Activated naive CD4-positive, alpha-beta T cell treated with anti-CD3 and anti-CD28 coated beads for 36 hours (primary cell): ENCODE measurements at regions of chr20 and their contacts with region 1.

Region 1: DNA sequence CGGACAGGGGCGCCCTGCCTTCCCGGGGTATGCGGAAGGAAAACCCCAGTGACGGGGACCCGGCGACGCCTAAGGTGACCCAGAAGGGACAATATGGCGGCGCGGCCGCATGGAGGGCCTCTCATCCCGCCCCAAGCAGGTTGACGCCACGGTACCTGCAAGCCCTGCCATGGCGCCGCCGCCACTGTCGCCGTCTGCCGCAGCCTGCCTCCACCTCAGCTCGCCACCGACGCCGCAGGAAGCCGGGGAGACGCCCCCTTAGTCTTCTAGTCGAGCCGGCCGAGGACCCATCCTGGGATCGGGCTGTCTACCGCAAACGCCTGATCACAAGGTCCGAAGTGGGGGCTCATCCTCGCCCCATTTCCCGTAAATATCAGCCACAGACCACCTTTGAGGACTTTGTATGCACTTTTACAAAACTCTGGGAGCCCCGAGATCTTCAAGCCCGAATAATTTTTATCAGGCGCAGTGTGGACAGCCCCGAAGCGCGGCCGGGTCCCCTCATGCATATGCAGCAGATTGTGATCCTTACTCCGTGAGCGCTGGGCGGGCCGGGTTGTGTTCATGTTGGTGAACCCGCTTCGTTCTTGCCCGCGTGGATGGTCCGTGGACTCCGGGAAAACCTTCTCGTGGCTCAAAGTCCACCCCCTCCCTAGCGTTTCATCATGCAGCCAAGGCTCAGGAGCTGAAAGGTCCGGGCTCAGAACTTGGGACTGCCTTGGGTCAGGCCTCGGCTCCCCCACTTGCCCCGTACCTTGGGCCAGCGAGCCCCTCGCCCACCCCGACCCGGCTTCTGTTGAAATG is at the start of gene BLCAP:
- DNase-seq: peak; percentile 94
- H3K4me3 Mint-ChIP-seq: peak within 1 kb of the TSS; percentile 87
- H3K27ac Mint-ChIP-seq: peak within 1 kb of the TSS; percentile 99
- H3K4me1 Mint-ChIP-seq: peaks cover 42% of the 10 kb centered on the region
- H3K27me3 Mint-ChIP-seq: no peaks in the 10 kb centered on the region
- total RNA-seq, gene BLCAP: 14.2 to 16.2 TPM

Region 2: GRCh38 chr20:36919715-36920333 is 608.0 kb before region 1 on chr20:
- CTCF ChIA-PET with region 1: no interaction called
- intact Hi-C with region 1: no loop called
- DNase-seq: peak; percentile 43
- H3K4me3 Mint-ChIP-seq: no peak overlapping the region
- H3K27ac Mint-ChIP-seq: peak overlapping the region; percentile 67
- H3K4me1 Mint-ChIP-seq: peaks cover 17% of the 10 kb centered on the region
- H3K27me3 Mint-ChIP-seq: no peaks in the 10 kb centered on the region

Region 3: GRCh38 chr20:37095599-37096414 is 432.0 kb before region 1 on chr20 and contains the start of gene RBL1:
- CTCF ChIA-PET with region 1: no interaction called
- intact Hi-C with region 1: loop called (anchors 2 kb)
- DNase-seq: peak; percentile 91
- H3K4me3 Mint-ChIP-seq: peak within 1 kb of the TSS; percentile 92
- H3K27ac Mint-ChIP-seq: peak within 1 kb of the TSS; percentile 100
- H3K4me1 Mint-ChIP-seq: peaks cover 37% of the 10 kb centered on the region
- H3K27me3 Mint-ChIP-seq: no peaks in the 10 kb centered on the region
- total RNA-seq, gene RBL1: 32.9 to 36.2 TPM

Region 4: GRCh38 chr20:37178839-37179670 is 348.8 kb before region 1 on chr20 and contains the starts of genes MROH8 and RPN2:
- CTCF ChIA-PET with region 1: interaction called, 3 read pairs
- intact Hi-C with region 1: loop called (anchors 1 kb)
- DNase-seq: peak; percentile 98
- H3K4me3 Mint-ChIP-seq: peak within 1 kb of the TSS; percentile 94
- H3K27ac Mint-ChIP-seq: peak within 1 kb of the TSS; percentile 97
- H3K4me1 Mint-ChIP-seq: peaks cover 37% of the 10 kb centered on the region
- H3K27me3 Mint-ChIP-seq: no peaks in the 10 kb centered on the region
- total RNA-seq, gene MROH8: 0.54 to 0.91 TPM
- total RNA-seq, gene RPN2: 102 to 104 TPM

Region 5: DNA sequence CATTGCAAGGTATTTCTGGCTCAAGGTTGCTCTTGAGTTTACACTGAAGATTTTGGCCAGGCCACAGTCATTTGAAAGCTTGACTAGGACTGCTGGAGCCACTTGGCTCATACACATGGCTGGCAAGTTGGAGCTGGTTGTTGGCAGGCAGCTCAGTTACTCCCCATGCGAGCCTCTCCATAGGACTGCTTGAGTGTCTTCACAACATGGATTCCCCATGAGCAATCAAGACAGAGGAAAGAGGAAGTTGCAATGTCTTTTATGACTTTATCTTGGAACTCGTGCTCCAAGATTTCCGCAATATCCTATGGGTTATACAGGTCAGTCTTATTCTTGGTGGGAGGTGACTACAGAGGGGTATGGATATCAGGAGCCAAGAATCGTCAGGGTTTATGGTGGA is 239.7 kb before region 1 on chr20:
- CTCF ChIA-PET with region 1: no interaction called
- intact Hi-C with region 1: loop called (anchors 5 kb)
- DNase-seq: no peak
- H3K4me3 Mint-ChIP-seq: no peak overlapping the region
- H3K27ac Mint-ChIP-seq: no peak overlapping the region
- H3K4me1 Mint-ChIP-seq: peaks cover 17% of the 10 kb centered on the region
- H3K27me3 Mint-ChIP-seq: no peaks in the 10 kb centered on the region

Region 6: DNA sequence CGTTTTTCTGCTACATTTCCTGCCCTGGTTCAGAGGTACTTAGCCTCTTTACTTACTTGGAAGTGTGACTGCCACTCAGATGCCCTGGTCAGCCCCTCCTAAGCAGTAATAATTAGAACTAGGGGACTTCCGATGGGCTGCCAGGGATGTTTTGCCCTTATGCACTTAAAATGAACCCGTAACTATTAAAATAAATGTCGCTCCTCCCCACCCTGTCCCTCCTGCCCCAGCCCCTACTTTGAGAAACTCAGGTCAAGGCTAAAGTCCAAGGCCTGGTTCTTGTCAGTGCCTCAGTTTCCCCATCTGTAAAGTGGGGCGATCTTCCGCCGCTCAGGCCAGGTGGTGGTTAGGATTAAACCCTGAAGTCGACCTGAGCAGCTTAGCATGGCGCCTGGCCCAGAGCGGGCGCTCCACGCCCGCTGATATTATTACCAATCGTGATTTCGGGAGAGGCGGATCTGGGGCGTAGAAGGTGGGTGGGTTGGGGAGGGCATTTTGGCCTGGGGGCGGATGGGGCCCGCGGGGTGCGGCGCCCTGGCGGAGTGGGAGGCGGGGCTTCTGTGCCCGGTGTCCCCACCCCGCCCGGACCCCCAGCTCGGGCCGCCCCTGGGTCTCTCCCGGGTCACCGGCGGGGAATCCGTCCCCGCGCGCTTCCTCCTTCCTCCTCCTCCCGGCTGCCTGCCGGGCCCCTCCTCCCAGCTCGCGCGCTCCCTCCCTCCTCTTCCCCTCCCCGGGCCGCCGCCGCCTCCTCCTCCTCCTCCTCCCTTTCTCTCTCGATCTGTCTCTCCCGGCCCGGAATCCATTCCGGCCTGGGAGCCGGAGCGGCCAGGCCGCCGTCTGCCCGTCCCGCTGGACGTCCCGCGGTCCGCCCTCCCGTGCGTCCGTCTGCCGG is 182.3 kb before region 1 on chr20 and contains the start of gene SRC:
- CTCF ChIA-PET with region 1: no interaction called
- intact Hi-C with region 1: loop called (anchors 2 kb)
- DNase-seq: peak; percentile 68
- H3K4me3 Mint-ChIP-seq: peak within 1 kb of the TSS; percentile 65
- H3K27ac Mint-ChIP-seq: no peak within 1 kb of the TSS
- H3K4me1 Mint-ChIP-seq: peaks cover 8% of the 10 kb centered on the region
- H3K27me3 Mint-ChIP-seq: no peaks in the 10 kb centered on the region
- total RNA-seq, gene SRC: 2.0 to 2.8 TPM

Region 7: DNA sequence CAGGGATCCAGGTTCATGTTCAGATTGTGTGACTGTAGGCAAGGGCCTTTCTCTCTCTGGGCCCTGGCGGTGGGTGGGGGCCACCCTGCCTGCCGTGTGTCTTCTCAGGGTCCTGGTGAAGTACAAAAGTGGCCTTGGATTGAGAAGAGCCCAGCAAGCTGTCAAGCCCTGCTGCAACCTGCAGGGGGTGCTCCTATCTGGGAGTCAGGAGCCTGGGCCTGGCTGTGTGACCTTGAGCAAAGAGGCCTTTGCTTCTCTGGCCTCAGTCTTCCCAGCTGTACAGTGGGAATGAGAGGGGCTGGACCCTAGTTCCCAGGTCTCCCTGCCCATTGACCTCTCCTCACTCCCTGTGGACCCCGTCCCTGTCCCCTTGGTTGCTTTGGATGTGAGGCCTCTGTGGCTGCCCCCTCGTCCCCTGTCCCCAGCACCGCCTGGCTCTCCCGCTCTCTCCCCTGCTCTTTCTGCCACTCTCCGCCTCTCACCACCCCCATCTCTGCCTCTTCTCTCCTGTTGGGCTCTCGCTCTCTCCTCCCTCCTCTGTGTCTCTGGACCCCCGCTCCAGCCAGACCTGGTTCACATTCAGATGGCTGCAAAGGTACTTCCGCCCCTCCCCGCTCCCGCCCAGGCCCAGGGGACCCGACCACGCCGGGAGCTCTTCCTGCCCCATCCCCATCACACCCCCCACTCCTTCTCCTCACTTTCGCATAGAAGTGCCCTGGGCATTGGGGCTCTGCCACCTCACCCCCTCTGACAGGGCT is 135.2 kb before region 1 on chr20:
- CTCF ChIA-PET with region 1: interaction called, 3 read pairs
- intact Hi-C with region 1: loop called (anchors 1 kb)
- DNase-seq: peak; percentile 40
- H3K4me3 Mint-ChIP-seq: no peak overlapping the region
- H3K27ac Mint-ChIP-seq: no peak overlapping the region
- H3K4me1 Mint-ChIP-seq: no peaks in the 10 kb centered on the region
- H3K27me3 Mint-ChIP-seq: no peaks in the 10 kb centered on the region

Region 8: GRCh38 chr20:37406010-37406998 is 121.5 kb before region 1 on chr20:
- CTCF ChIA-PET with region 1: no interaction called
- intact Hi-C with region 1: loop called (anchors 5 kb)
- DNase-seq: peak; percentile 22
- H3K4me3 Mint-ChIP-seq: peak overlapping the region; percentile 52
- H3K27ac Mint-ChIP-seq: no peak overlapping the region
- H3K4me1 Mint-ChIP-seq: peaks cover 12% of the 10 kb centered on the region
- H3K27me3 Mint-ChIP-seq: peaks cover 20% of the 10 kb centered on the region

Region 9: GRCh38 chr20:37463726-37464494 is 63.9 kb before region 1 on chr20:
- CTCF ChIA-PET with region 1: no interaction called
- intact Hi-C with region 1: no loop called
- DNase-seq: no peak
- H3K4me3 Mint-ChIP-seq: no peak overlapping the region
- H3K27ac Mint-ChIP-seq: no peak overlapping the region
- H3K4me1 Mint-ChIP-seq: no peaks in the 10 kb centered on the region
- H3K27me3 Mint-ChIP-seq: peaks cover 4% of the 10 kb centered on the region